CD4-positive, alpha-beta T cell (primary cell): ENCODE measurements at regions of chr16 and their contacts with region 1.

Region 1: GRCh38 chr16:84175350-84176081 is 11.3 kb downstream of the TAF1C start:
- DNase-seq: peak in 11 of 14 experiments; percentile 28 to 72 (median 53)
- ATAC-seq: peak; percentile 99
- H3K4me3 ChIP-seq: no peak overlapping the region
- H3K4me3 Mint-ChIP-seq: no peak overlapping the region
- H3K27ac ChIP-seq: no peak overlapping the region
- H3K27ac Mint-ChIP-seq: no peak overlapping the region
- H3K4me1 ChIP-seq: no peaks in the 10 kb centered on the region
- H3K4me1 Mint-ChIP-seq: peaks cover 6% of the 10 kb centered on the region
- H3K27me3 ChIP-seq: peaks cover 0 to 2% of the 10 kb centered on the region in 2 experiments
- H3K27me3 Mint-ChIP-seq: no peaks in the 10 kb centered on the region
- CTCF ChIP-seq: peak; percentile 75

Region 2: DNA sequence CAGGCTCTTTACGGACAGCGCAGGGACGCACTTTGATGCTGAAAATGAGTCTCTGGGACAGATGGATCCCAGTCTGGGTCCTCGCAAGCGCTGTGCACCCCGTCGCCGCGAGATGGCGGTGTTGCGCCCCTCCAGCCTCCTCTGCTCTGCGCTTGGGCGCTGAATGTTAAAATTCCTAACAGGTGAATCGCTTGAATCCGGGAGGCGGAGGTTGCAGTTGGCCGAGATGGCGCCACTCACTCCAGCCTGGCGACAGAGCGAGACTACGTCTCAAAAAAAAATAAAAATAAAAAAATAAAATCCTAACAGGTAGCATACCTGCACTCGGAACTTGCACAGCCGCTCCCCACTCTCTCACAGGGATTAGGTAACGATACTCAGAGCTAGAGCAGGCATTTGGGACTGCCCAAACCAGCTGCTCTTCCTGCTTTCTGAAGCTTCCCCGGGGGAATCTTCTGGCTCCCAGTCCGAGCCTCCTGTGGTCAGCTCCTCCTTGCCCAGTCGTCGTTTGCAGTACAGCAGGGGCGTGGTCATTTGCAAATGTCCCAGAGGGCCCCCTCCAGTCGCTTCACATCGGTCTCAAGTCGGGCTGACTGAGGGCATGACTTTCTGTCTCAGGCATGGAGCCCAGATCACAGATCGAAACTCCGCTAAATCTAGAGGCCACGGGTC is 248.7 kb before region 1 on chr16:
- CTCF ChIA-PET with region 1: no interaction called
- POLR2A ChIA-PET with region 1: no interaction called
- intact Hi-C with region 1: loop called in 1 of 2 experiments (anchors 10 kb)
- DNase-seq: peak; percentile 33 to 71 (median 50)
- ATAC-seq: peak; percentile 78
- H3K4me3 ChIP-seq: no peak overlapping the region
- H3K4me3 Mint-ChIP-seq: no peak overlapping the region
- H3K27ac ChIP-seq: no peak overlapping the region
- H3K27ac Mint-ChIP-seq: no peak overlapping the region
- H3K4me1 ChIP-seq: peaks cover 3% of the 10 kb centered on the region
- H3K4me1 Mint-ChIP-seq: peaks cover 3% of the 10 kb centered on the region
- H3K27me3 ChIP-seq: no peaks in the 10 kb centered on the region
- H3K27me3 Mint-ChIP-seq: no peaks in the 10 kb centered on the region
- CTCF ChIP-seq: peak; percentile 91

Region 3: GRCh38 chr16:83956336-83957289 is 218.9 kb before region 1 on chr16:
- CTCF ChIA-PET with region 1: no interaction called
- POLR2A ChIA-PET with region 1: no interaction called
- intact Hi-C with region 1: loop called in 1 of 2 experiments (anchors 2 kb)
- DNase-seq: peak; percentile 44 to 78 (median 58)
- ATAC-seq: peak; percentile 52
- H3K4me3 ChIP-seq: no peak overlapping the region
- H3K4me3 Mint-ChIP-seq: no peak overlapping the region
- H3K27ac ChIP-seq: no peak overlapping the region
- H3K27ac Mint-ChIP-seq: no peak overlapping the region
- H3K4me1 ChIP-seq: peaks cover 17% of the 10 kb centered on the region
- H3K4me1 Mint-ChIP-seq: peaks cover 12% of the 10 kb centered on the region
- H3K27me3 ChIP-seq: peaks cover 36 to 39% of the 10 kb centered on the region in 2 experiments
- H3K27me3 Mint-ChIP-seq: peaks cover 33% of the 10 kb centered on the region
- CTCF ChIP-seq: peak; percentile 70

Region 4: DNA sequence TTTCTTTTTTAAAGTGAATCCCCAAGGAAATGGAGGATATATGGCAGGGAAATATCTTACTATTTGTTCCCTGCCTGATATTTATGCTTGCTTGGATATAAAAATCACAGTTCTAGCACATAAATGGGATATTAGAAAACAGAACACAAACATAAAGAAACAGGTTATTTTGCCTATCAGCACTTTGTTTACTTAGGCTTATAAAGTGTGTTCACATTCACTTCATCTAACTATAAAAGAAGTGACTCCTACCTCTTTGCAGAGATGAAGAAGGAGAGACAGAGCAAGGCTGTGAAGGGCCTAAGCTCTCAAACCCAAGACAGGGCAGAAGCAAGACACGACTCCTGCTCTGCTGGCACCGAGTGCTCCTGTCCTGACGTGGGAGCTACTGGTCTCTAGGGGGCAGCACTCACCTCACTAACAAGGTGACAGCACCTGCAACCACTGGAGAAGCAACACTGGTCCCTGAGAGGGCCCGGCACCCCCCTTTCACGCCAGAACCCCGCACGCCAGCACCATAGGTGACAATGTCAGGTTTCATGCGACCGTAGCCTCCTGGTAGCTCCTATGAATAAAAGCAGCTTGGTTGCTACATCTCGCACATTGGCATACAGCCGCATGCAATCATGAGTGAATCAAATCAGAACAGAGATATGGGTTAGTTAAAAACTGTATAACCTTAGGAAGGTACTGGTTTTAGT is 90.8 kb before region 1 on chr16:
- CTCF ChIA-PET with region 1: no interaction called
- POLR2A ChIA-PET with region 1: no interaction called
- intact Hi-C with region 1: loop called (anchors 1 kb)
- DNase-seq: peak; percentile 50 to 87 (median 64)
- ATAC-seq: peak; percentile 85
- H3K4me3 ChIP-seq: no peak overlapping the region
- H3K4me3 Mint-ChIP-seq: peak overlapping the region; percentile 42
- H3K27ac ChIP-seq: no peak overlapping the region
- H3K27ac Mint-ChIP-seq: peak overlapping the region; percentile 63
- H3K4me1 ChIP-seq: peaks cover 28% of the 10 kb centered on the region
- H3K4me1 Mint-ChIP-seq: peaks cover 48% of the 10 kb centered on the region
- H3K27me3 ChIP-seq: no peaks in the 10 kb centered on the region
- H3K27me3 Mint-ChIP-seq: no peaks in the 10 kb centered on the region
- CTCF ChIP-seq: peak; percentile 81

Region 5: GRCh38 chr16:84116720-84117493 is 58.6 kb before region 1 on chr16 and contains the start of gene MBTPS1:
- CTCF ChIA-PET with region 1: interaction called, 3 read pairs
- POLR2A ChIA-PET with region 1: no interaction called
- intact Hi-C with region 1: loop called in 1 of 2 experiments (anchors 2 kb)
- DNase-seq: peak; percentile 94 to 99 (median 98)
- ATAC-seq: peak; percentile 84
- H3K4me3 ChIP-seq: peak within 1 kb of the TSS; percentile 91
- H3K4me3 Mint-ChIP-seq: peak within 1 kb of the TSS; percentile 96
- H3K27ac ChIP-seq: peak within 1 kb of the TSS; percentile 84 to 85
- H3K27ac Mint-ChIP-seq: peak within 1 kb of the TSS; percentile 98
- H3K4me1 ChIP-seq: peaks cover 37% of the 10 kb centered on the region
- H3K4me1 Mint-ChIP-seq: peaks cover 34% of the 10 kb centered on the region
- H3K27me3 ChIP-seq: no peaks in the 10 kb centered on the region
- H3K27me3 Mint-ChIP-seq: no peaks in the 10 kb centered on the region
- CTCF ChIP-seq: peak; percentile 49
- total RNA-seq, gene MBTPS1: 121 to 122 TPM

Region 6: GRCh38 chr16:84277237-84277823 is 101.8 kb after region 1 on chr16:
- CTCF ChIA-PET with region 1: no interaction called
- POLR2A ChIA-PET with region 1: no interaction called
- intact Hi-C with region 1: no loop called
- DNase-seq: peak; percentile 50 to 83 (median 68)
- ATAC-seq: peak; percentile 69
- H3K4me3 ChIP-seq: no peak overlapping the region
- H3K4me3 Mint-ChIP-seq: no peak overlapping the region
- H3K27ac ChIP-seq: no peak overlapping the region
- H3K27ac Mint-ChIP-seq: no peak overlapping the region
- H3K4me1 ChIP-seq: peaks cover 3% of the 10 kb centered on the region
- H3K4me1 Mint-ChIP-seq: no peaks in the 10 kb centered on the region
- H3K27me3 ChIP-seq: peaks cover 0 to 3% of the 10 kb centered on the region in 2 experiments
- H3K27me3 Mint-ChIP-seq: peaks cover 6% of the 10 kb centered on the region
- CTCF ChIP-seq: peak; percentile 92